Caco-2 (cell line): ENCODE measurements at regions of chr17 and their contacts with region 1.

Region 1: GRCh38 chr17:39335704-39336223 is 65.7 kb downstream of the FBXL20 start:
- DNase-seq: no peak
- H3K4me3 ChIP-seq: no peak overlapping the region
- H3K4me3 Mint-ChIP-seq: no peak overlapping the region
- H3K27ac Mint-ChIP-seq: no peak overlapping the region
- H3K4me1 ChIP-seq: peaks cover 4% of the 10 kb centered on the region; the same call in 1 of the 2 replicates
- H3K4me1 Mint-ChIP-seq: peaks cover 10% of the 10 kb centered on the region
- H3K27me3 ChIP-seq: no peaks in the 10 kb centered on the region
- H3K27me3 Mint-ChIP-seq: no peaks in the 10 kb centered on the region
- CTCF ChIP-seq: no peak

Region 2: DNA sequence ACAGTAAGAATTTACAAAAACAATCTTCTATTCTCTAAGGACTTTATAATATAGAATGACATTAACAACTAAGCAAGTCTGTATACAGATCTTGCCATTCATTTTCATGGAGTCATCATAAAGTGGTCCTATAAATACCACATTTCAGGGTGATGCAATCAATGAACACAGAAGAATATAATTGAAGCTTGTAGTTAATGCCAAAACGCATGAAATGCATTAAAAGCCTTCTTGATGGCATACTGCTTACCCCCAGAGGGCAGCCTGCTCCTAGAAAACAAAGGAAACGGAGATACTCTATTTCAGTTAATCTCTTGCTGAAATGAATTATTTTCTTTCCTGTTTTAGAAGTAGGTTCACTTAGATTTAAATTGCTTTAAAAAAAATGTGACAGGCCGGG is 64.8 kb before region 1 on chr17:
- CTCF ChIA-PET with region 1: interaction called, 4 read pairs
- POLR2A ChIA-PET with region 1: no interaction called
- intact Hi-C with region 1: loop called (anchors 10 kb)
- DNase-seq: peak in 1 of 2 experiments; percentile 35
- H3K4me3 ChIP-seq: no peak overlapping the region
- H3K4me3 Mint-ChIP-seq: no peak overlapping the region
- H3K27ac Mint-ChIP-seq: no peak overlapping the region
- H3K4me1 ChIP-seq: no peaks in the 10 kb centered on the region
- H3K4me1 Mint-ChIP-seq: peaks cover 6% of the 10 kb centered on the region
- H3K27me3 ChIP-seq: no peaks in the 10 kb centered on the region
- H3K27me3 Mint-ChIP-seq: no peaks in the 10 kb centered on the region
- CTCF ChIP-seq: peak in 1 of 2 experiments; percentile 33

Region 3: DNA sequence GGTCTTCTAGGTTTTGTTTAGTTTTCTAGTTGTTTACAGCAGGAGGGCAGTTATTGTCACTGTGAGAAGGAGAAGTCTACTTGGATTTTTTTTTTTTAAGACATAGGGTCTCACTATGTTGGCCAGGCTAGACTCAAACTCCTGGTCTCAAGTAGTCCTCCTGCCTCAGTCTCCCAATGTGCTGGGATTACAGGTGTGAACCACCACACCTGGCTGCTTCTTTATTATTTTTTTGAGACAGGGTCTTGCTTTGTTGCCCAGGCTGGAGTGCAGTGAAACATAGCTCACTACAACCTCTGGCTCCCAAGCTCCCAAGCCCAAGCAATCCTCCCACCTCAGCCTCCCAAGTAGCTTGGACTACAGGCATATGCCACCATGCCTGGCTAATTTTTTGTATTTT is 41.7 kb before region 1 on chr17:
- CTCF ChIA-PET with region 1: no interaction called
- POLR2A ChIA-PET with region 1: interaction called, 16 read pairs
- intact Hi-C with region 1: no loop called
- DNase-seq: no peak
- H3K4me3 ChIP-seq: no peak overlapping the region
- H3K4me3 Mint-ChIP-seq: no peak overlapping the region
- H3K27ac Mint-ChIP-seq: no peak overlapping the region
- H3K4me1 ChIP-seq: no peaks in the 10 kb centered on the region
- H3K4me1 Mint-ChIP-seq: no peaks in the 10 kb centered on the region
- H3K27me3 ChIP-seq: no peaks in the 10 kb centered on the region
- H3K27me3 Mint-ChIP-seq: no peaks in the 10 kb centered on the region
- CTCF ChIP-seq: no peak